Activated CD8-positive, alpha-beta T cell treated with anti-CD3 and anti-CD28 coated beads, Interleukin-2, amount 10 ng/mL, durations not matched to agents 7 days and 5 days (primary cell): ENCODE measurements at regions of chr17 and their contacts with region 1.

Region 1: GRCh38 chr17:47978324-47978723 is 7.4 kb downstream of the CDK5RAP3 start:
- DNase-seq: peak; percentile 72
- ATAC-seq: peak; percentile 88
- H3K4me3 Mint-ChIP-seq: no peak overlapping the region
- H3K27ac Mint-ChIP-seq: no peak overlapping the region
- H3K4me1 Mint-ChIP-seq: peaks cover 29% of the 10 kb centered on the region
- H3K27me3 Mint-ChIP-seq: no peaks in the 10 kb centered on the region

Region 2: DNA sequence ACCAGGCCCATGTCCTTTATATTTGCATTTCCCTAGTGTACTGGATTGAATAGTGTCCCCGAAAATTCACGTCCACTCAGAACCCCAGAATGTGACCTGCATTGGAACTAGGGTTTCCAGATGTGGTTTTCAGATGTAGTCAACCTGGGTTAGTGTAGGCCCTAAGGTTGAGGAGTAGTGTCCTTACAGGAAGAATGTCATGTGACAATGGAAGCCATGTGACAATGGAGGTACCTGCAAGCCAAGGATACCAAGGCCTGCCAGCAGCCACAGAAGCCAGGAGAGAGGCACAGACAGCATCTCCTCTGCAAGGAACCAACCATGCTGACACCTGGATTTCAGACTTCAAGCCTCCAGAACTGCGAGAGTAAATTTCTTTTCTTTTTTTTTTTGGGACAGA is 15.4 kb before region 1 on chr17:
- CTCF ChIA-PET with region 1: no interaction called
- POLR2A ChIA-PET with region 1: no interaction called
- DNase-seq: no peak
- ATAC-seq: no peak
- H3K4me3 Mint-ChIP-seq: no peak overlapping the region
- H3K27ac Mint-ChIP-seq: no peak overlapping the region
- H3K4me1 Mint-ChIP-seq: no peaks in the 10 kb centered on the region
- H3K27me3 Mint-ChIP-seq: no peaks in the 10 kb centered on the region

Region 3: DNA sequence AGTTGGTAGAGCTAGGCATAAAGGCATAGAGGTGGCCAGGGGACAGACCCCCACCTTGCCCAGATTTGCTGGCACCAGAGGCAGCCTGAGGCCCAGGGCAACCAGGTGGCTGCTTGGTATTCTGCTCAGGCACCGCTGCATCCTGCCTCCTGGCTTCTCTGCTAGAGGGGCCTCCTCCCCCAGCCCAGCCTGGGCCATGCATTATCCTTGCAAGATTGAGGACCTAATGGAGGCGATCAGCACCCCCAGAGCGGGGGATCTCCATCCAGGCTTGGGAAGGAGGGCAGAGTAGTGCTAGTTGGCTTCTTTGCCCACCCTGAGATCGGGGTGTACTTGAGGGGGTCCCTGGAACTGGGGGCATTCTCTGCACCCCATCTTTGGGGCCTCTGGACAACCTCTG is 16.4 kb after region 1 on chr17:
- CTCF ChIA-PET with region 1: interaction called, 12 read pairs
- POLR2A ChIA-PET with region 1: interaction called, 3 read pairs
- DNase-seq: no peak
- ATAC-seq: no peak
- H3K4me3 Mint-ChIP-seq: no peak overlapping the region
- H3K27ac Mint-ChIP-seq: no peak overlapping the region
- H3K4me1 Mint-ChIP-seq: peaks cover 6% of the 10 kb centered on the region
- H3K27me3 Mint-ChIP-seq: peaks cover 24% of the 10 kb centered on the region

Region 4: GRCh38 chr17:48002266-48002915 is 24.1 kb after region 1 on chr17:
- CTCF ChIA-PET with region 1: interaction called, 12 read pairs
- POLR2A ChIA-PET with region 1: no interaction called
- DNase-seq: no peak
- ATAC-seq: no peak
- H3K4me3 Mint-ChIP-seq: no peak overlapping the region
- H3K27ac Mint-ChIP-seq: no peak overlapping the region
- H3K4me1 Mint-ChIP-seq: peaks cover 15% of the 10 kb centered on the region
- H3K27me3 Mint-ChIP-seq: peaks cover 35% of the 10 kb centered on the region

Region 5: DNA sequence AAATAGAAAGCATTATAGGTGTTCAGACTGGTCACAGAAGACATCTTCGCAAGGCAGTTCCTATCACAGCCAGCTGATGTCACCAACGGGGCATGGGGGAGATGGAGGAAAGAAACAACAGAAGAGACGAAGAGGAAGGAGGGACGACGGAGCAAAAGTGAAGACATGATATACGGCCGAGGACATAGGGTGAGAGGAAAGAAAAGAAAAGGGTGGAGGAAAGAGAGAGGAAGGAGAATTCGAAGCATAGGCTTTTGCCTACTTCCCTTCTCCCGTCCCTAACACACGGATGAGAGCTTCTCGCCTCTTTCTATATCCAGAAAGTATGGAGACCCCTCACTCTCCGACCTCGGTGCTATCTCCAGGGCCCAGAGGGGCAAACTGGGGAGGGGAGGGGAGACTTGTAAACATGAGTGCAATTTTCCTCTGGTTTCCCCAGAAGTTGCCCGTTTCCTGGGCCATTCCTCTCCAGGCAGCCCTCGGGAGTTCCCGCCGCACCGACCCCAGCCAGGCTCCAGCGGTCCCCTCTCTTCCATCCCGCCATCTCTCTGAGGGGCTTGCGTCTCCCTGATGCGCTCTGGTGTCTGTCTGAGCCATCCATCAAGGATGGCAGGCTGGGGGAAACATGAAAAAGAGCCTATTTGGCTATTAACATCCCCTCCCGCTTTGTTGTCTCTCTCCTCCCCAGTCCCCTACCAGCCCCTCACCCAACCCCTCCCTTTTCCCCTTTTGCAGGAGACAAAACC is 33.3 kb after region 1 on chr17:
- CTCF ChIA-PET with region 1: interaction called, 79 read pairs
- POLR2A ChIA-PET with region 1: no interaction called
- DNase-seq: peak; percentile 74
- ATAC-seq: peak; percentile 77
- H3K4me3 Mint-ChIP-seq: peak overlapping the region; percentile 63
- H3K27ac Mint-ChIP-seq: no peak overlapping the region
- H3K4me1 Mint-ChIP-seq: peaks cover 22% of the 10 kb centered on the region
- H3K27me3 Mint-ChIP-seq: peaks cover 44% of the 10 kb centered on the region